Activated CD4-positive, alpha-beta memory T cell treated with anti-CD3 and anti-CD28 coated beads for 36 hours (primary cell): ENCODE measurements at regions of chr5 and their contacts with region 1.

Region 1: GRCh38 chr5:149990518-149991376 is 9.7 kb downstream of the TIGD6 start:
- DNase-seq: peak; percentile 76
- H3K4me3 Mint-ChIP-seq: no peak overlapping the region
- H3K27ac Mint-ChIP-seq: no peak overlapping the region
- H3K4me1 Mint-ChIP-seq: no peaks in the 10 kb centered on the region
- H3K27me3 Mint-ChIP-seq: no peaks in the 10 kb centered on the region

Region 2: DNA sequence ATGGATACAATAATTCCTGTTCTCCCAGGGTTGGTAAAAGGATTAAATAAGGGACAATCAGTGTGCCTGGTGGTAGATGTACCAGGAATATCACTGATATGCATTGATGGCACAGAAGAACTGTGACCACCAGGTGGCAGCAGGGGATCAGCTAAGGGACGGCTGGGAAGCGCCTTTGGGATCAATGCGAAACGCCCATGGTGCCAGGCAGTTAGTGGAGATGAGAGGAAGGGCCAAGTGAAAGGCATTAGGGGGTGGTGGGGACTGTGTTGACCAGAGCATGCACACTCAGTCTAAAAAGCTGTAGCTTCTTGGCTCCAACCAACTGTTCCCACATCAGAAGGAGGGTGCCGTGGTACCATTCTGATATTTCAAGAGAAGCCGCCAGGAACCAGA is 353.9 kb before region 1 on chr5:
- CTCF ChIA-PET with region 1: interaction called, 14 read pairs
- POLR2A ChIA-PET with region 1: no interaction called
- intact Hi-C with region 1: loop called (anchors 1 kb)
- DNase-seq: peak; percentile 74
- H3K4me3 Mint-ChIP-seq: no peak overlapping the region
- H3K27ac Mint-ChIP-seq: no peak overlapping the region
- H3K4me1 Mint-ChIP-seq: peaks cover 16% of the 10 kb centered on the region
- H3K27me3 Mint-ChIP-seq: no peaks in the 10 kb centered on the region

Region 3: DNA sequence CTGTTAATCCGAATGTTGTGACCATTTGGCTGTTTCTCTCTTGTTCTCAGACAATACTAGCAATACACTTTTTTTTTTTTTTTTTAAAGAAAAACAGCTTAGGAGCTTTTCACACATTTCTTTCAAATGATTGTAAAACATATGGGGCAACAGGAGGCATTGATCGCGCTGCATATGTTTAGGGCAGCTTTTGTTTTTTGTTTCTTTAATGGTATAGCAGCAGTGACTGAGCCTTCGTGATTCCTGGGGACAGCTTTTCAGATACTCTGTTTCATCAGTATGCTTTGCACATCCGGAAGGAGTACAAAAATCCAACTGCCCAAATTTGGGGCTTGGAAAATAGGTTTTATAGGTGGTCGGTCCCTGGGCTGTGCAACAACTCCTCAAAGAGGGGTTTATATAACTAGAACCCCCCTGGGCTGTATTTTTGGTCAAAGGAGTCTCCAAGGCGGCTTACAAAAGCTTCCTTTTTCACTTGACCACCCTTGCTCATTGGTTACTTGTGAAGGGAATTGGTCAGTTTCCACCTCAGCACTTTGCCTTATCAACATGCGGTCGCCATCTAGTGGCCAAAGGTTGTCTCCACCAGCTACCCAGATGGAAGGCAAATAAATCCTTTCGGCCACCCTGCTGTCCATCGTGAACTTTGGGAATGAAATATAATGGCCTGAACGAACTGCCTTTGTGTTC is 138.0 kb before region 1 on chr5:
- CTCF ChIA-PET with region 1: interaction called, 30 read pairs
- POLR2A ChIA-PET with region 1: no interaction called
- intact Hi-C with region 1: no loop called
- DNase-seq: peak; percentile 61
- H3K4me3 Mint-ChIP-seq: no peak overlapping the region
- H3K27ac Mint-ChIP-seq: no peak overlapping the region
- H3K4me1 Mint-ChIP-seq: no peaks in the 10 kb centered on the region
- H3K27me3 Mint-ChIP-seq: no peaks in the 10 kb centered on the region

Region 4: GRCh38 chr5:149860801-149861322 is 129.9 kb before region 1 on chr5:
- CTCF ChIA-PET with region 1: interaction called, 12 read pairs
- POLR2A ChIA-PET with region 1: no interaction called
- intact Hi-C with region 1: no loop called
- DNase-seq: peak; percentile 52
- H3K4me3 Mint-ChIP-seq: no peak overlapping the region
- H3K27ac Mint-ChIP-seq: no peak overlapping the region
- H3K4me1 Mint-ChIP-seq: peaks cover 9% of the 10 kb centered on the region
- H3K27me3 Mint-ChIP-seq: no peaks in the 10 kb centered on the region

Region 5: GRCh38 chr5:149960272-149961185 is 30.2 kb before region 1 on chr5 and contains the start of gene SLC26A2:
- CTCF ChIA-PET with region 1: interaction called, 59 read pairs
- POLR2A ChIA-PET with region 1: no interaction called
- intact Hi-C with region 1: loop called (anchors 2 kb)
- DNase-seq: peak; percentile 97
- H3K4me3 Mint-ChIP-seq: peak within 1 kb of the TSS; percentile 91
- H3K27ac Mint-ChIP-seq: peak within 1 kb of the TSS; percentile 97
- H3K4me1 Mint-ChIP-seq: peaks cover 25% of the 10 kb centered on the region
- H3K27me3 Mint-ChIP-seq: no peaks in the 10 kb centered on the region
- total RNA-seq, gene SLC26A2: 5.9 to 6.2 TPM

Region 6: DNA sequence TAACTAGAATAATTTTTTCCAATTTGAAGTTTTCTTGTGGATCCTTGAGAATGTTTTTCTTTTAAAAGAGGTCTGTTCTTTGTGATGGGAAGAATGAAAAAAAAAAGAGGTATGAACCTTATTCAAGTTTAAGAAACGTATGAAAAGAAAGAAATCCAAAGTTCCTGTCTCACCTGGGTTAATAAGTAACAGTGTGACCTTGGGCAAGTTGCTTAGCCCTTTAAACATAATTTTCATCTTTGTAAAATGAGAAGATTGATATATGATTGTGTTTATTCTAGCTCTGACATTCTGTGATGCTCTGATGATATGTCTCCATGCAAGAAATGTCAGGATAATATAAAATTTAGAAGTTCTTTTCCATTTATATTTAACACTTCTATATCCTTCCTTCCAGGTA is 10.9 kb before region 1 on chr5:
- CTCF ChIA-PET with region 1: interaction called, 19 read pairs
- POLR2A ChIA-PET with region 1: no interaction called
- intact Hi-C with region 1: no loop called
- DNase-seq: no peak
- H3K4me3 Mint-ChIP-seq: no peak overlapping the region
- H3K27ac Mint-ChIP-seq: no peak overlapping the region
- H3K4me1 Mint-ChIP-seq: peaks cover 4% of the 10 kb centered on the region
- H3K27me3 Mint-ChIP-seq: no peaks in the 10 kb centered on the region

Region 7: DNA sequence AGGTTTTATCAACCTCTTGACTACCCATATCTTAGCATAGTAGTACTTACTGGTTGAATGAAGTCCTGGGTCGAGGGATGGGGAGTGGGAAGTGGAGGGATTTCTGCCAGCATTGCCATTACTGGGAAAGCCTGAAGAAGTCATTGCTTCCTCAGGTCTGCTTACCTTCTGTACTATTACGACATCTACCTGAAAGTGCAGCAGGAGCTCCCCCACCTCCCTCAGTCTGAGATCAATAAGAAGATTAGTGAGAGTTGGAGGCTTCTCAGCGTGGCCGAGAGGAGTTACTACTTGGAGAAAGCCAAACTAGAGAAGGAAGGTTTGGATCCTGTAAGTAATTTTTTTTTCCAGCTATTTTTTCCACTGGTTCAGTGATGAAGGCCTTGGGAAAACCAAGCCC is 15.6 kb after region 1 on chr5:
- CTCF ChIA-PET with region 1: interaction called, 21 read pairs
- POLR2A ChIA-PET with region 1: no interaction called
- intact Hi-C with region 1: no loop called
- DNase-seq: no peak
- H3K4me3 Mint-ChIP-seq: no peak overlapping the region
- H3K27ac Mint-ChIP-seq: no peak overlapping the region
- H3K4me1 Mint-ChIP-seq: peaks cover 37% of the 10 kb centered on the region
- H3K27me3 Mint-ChIP-seq: no peaks in the 10 kb centered on the region

Region 8: DNA sequence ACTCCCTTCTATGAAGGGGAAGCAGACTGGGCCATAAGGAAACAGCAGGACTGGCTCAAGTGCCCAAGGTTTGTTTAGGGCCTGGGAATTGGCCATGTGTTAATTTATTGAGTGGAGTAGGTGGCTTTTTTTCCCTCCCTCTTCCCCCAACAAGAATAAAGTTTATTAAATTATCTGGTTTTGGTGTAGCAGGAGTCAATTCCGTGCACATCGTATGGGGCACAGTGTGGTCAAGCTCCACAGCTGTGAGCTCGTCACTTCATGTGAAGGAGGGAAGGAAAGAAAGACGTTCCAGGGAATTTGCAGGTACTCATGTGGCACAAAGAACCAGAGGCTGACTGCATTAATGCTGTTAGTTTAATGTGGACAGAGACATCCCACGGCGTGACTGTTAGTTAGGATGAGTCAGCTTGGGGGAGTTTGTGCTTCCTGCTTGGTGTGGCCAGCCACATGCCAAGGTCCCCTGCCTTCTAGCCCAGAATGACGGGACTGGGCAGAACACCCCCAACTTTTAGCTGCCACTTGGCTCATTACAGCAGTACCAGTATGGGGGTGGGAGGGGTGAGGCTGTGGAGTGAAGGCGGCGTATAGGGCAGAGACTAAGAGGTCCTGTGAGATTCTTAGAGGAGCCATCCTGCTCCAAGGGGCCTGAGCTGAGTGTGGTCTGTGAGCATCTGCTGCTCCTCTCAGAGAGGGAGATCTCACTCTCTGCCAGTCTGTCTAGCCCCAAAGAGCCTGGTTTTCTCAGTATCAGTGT is 62.4 kb after region 1 on chr5:
- CTCF ChIA-PET with region 1: no interaction called
- POLR2A ChIA-PET with region 1: no interaction called
- intact Hi-C with region 1: no loop called
- DNase-seq: no peak
- H3K4me3 Mint-ChIP-seq: no peak overlapping the region
- H3K27ac Mint-ChIP-seq: no peak overlapping the region
- H3K4me1 Mint-ChIP-seq: no peaks in the 10 kb centered on the region
- H3K27me3 Mint-ChIP-seq: no peaks in the 10 kb centered on the region